Activated CD4-positive, alpha-beta T cell treated with anti-CD3 and anti-CD28 coated beads for 36 hours (primary cell): ENCODE measurements at regions of chr12 and their contacts with region 1.

Region 1: DNA sequence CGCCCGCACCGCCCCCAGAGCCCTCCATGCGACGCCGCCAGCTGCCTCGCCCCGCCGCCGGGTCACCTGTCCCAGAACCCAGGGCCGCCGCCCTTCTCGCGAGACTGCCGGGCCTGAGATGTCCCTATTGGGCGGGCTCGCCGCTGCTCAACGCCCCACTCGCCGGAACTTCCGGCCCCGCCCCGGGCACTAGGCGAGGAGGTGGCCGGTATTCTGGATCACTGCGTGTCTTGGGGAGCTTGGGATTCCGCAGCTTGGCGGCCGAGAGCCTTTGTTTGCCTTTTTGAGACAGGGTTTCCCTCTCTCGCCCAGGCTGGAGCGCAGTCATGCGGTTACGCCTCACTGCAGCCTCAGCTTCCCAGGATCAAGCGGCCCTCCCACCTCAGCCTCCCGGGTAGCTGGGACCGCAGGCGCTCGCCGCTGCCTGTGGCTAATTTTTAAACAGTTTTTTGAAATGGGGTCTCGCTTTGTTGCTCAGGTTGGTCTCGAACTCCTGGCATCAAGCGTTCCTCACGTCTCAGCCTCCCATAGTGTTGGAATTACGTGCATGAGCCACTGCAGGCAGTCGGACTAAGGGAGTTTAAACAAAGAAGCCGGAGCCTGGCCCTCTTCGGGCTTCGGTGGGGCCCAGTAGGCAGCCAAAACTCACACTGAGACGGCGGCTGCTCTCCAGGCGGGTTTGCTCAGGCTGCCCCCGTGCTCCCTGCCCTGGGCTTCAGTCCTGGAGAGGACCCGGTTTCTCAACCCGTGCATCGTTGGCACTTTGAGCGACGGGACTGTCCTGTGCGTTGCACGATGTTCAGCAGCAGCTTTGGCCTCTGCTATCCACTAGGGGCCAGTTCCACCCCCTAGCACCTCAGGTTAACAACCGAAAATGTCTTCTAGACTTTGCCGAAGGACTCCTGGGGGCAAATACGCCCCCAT is at the start of gene SLC15A4:
- DNase-seq: peak; percentile 98
- ATAC-seq: peak; percentile 94
- H3K4me3 Mint-ChIP-seq: peak within 1 kb of the TSS; percentile 86
- H3K27ac Mint-ChIP-seq: peak within 1 kb of the TSS; percentile 55
- H3K4me1 Mint-ChIP-seq: peaks cover 29% of the 10 kb centered on the region
- H3K27me3 Mint-ChIP-seq: peaks cover 8% of the 10 kb centered on the region
- total RNA-seq, gene SLC15A4: 24.2 to 25.9 TPM

Region 2: DNA sequence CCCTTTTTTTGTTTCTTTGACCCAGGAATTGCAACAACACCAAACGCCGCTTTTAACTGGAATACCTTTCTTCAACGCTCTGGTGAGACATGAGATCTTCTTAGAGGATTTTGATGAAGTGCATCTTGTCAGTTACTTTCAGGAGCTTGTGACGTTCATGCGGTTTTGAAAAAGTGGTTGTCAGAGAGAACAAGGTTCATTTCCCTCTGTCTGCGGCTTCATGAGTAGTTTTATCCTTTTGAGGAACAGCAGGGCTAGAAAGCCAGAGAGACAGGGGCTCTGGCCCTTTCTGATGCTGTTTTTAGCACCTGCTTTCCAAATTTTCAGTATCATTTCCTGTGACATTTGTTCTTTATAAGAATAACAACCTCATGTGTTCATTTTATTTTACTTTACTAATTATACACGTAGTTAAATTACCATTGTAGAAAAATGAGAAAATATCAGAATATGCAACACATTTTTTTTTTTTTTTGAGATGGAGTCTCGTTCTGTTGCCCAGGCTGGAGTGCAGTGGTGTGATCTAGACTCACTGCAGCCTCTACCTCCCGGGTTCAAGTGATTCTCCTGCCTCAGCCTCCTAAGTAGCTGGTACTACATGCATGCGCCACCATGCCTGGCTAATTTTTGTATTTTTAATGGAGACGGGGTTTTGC is 90.9 kb after region 1 on chr12:
- CTCF ChIA-PET with region 1: no interaction called
- POLR2A ChIA-PET with region 1: no interaction called
- intact Hi-C with region 1: loop called (anchors 2 kb)
- DNase-seq: peak; percentile 76
- ATAC-seq: peak; percentile 83
- H3K4me3 Mint-ChIP-seq: peak overlapping the region; percentile 6
- H3K27ac Mint-ChIP-seq: peak overlapping the region; percentile 78
- H3K4me1 Mint-ChIP-seq: peaks cover 59% of the 10 kb centered on the region
- H3K27me3 Mint-ChIP-seq: no peaks in the 10 kb centered on the region